Activated naive CD4-positive, alpha-beta T cell treated with anti-CD3 and anti-CD28 coated beads for 36 hours (primary cell): ENCODE measurements at regions of chr15 and their contacts with region 1.

Region 1: GRCh38 chr15:80957556-80957955 is 32.1 kb downstream of the MESD start:
- DNase-seq: no peak
- H3K4me3 Mint-ChIP-seq: no peak overlapping the region
- H3K27ac Mint-ChIP-seq: no peak overlapping the region
- H3K4me1 Mint-ChIP-seq: peaks cover 17% of the 10 kb centered on the region
- H3K27me3 Mint-ChIP-seq: no peaks in the 10 kb centered on the region

Region 2: DNA sequence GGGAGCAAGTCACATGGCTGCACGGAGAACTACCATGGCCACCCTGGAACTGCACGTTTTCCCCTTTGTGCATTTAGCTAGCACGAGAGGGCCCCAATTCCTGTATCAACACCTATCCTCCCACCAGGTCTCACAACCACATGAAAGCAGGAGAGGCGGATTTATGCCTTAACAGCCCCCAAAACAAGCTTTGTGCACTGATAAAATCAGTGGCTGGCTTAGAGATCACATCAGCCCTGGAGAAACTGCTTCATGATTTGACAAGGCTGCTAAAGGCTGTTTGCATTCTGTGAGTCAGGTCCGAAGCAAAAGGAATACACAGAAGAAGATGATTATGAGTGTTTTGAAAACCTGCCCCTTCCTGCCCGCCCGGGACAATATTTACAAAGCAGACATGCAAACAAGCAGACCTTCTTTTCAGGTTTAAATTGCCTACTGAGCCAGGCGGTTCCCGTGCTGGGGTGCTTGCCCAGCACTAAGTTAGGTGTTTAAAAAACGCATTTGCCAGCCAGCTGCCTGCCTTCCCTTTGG is 152.5 kb before region 1 on chr15:
- CTCF ChIA-PET with region 1: no interaction called
- intact Hi-C with region 1: loop called (anchors 5 kb)
- DNase-seq: peak; percentile 42
- H3K4me3 Mint-ChIP-seq: no peak overlapping the region
- H3K27ac Mint-ChIP-seq: no peak overlapping the region
- H3K4me1 Mint-ChIP-seq: peaks cover 24% of the 10 kb centered on the region
- H3K27me3 Mint-ChIP-seq: no peaks in the 10 kb centered on the region

Region 3: DNA sequence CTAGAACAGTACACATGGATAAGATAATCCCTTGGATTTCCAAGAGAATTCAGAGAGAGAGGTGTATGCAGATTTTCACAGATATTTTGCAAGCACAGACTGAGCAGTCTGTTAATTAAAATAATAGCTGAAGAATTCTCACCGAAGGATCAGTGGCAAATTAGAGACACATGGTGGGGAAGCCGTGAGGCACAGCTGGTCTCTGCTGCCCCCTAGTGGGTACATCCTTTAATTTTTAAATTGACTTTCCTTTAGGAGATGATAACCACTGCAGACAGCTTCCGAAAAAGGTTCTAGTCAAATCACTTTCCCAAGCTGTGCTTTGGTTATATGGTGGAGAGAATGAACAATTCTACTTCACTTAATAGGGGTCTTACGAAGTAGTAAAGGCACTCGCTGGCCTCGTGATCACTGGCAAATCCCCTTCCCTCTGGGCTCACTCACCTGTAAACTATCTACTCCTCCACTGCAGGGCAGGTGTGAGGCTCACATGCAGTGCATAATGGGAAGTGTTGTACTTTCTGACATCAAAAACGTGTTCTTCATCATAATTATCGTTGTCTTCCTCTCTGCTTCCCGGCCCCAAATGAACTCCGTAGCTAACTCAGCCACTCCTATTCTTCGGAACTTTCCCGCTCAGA is 12.6 kb after region 1 on chr15:
- CTCF ChIA-PET with region 1: interaction called, 15 read pairs
- intact Hi-C with region 1: no loop called
- DNase-seq: peak; percentile 76
- H3K4me3 Mint-ChIP-seq: no peak overlapping the region
- H3K27ac Mint-ChIP-seq: no peak overlapping the region
- H3K4me1 Mint-ChIP-seq: peaks cover 8% of the 10 kb centered on the region
- H3K27me3 Mint-ChIP-seq: no peaks in the 10 kb centered on the region

Region 4: GRCh38 chr15:81038975-81039607 is 81.5 kb after region 1 on chr15:
- CTCF ChIA-PET with region 1: no interaction called
- intact Hi-C with region 1: no loop called
- DNase-seq: no peak
- H3K4me3 Mint-ChIP-seq: no peak overlapping the region
- H3K27ac Mint-ChIP-seq: no peak overlapping the region
- H3K4me1 Mint-ChIP-seq: peaks cover 7% of the 10 kb centered on the region
- H3K27me3 Mint-ChIP-seq: no peaks in the 10 kb centered on the region